ENCODE measurements at regions of chr11 and their contacts with region 1.

Region 1: GRCh38 chr11:798093-798713 is at the start of gene SLC25A22:
- DNase-seq: peak; percentile 95
- ATAC-seq: peak; percentile 77
- H3K4me3 Mint-ChIP-seq: peak within 1 kb of the TSS; percentile 93
- H3K27ac Mint-ChIP-seq: peak within 1 kb of the TSS; percentile 86
- H3K4me1 Mint-ChIP-seq: peaks cover 22% of the 10 kb centered on the region
- H3K27me3 Mint-ChIP-seq: no peaks in the 10 kb centered on the region
- CTCF ChIP-seq: peak; percentile 21
- total RNA-seq, gene SLC25A22: 30.1 and 35.4 TPM in 2 replicates

Region 2: DNA sequence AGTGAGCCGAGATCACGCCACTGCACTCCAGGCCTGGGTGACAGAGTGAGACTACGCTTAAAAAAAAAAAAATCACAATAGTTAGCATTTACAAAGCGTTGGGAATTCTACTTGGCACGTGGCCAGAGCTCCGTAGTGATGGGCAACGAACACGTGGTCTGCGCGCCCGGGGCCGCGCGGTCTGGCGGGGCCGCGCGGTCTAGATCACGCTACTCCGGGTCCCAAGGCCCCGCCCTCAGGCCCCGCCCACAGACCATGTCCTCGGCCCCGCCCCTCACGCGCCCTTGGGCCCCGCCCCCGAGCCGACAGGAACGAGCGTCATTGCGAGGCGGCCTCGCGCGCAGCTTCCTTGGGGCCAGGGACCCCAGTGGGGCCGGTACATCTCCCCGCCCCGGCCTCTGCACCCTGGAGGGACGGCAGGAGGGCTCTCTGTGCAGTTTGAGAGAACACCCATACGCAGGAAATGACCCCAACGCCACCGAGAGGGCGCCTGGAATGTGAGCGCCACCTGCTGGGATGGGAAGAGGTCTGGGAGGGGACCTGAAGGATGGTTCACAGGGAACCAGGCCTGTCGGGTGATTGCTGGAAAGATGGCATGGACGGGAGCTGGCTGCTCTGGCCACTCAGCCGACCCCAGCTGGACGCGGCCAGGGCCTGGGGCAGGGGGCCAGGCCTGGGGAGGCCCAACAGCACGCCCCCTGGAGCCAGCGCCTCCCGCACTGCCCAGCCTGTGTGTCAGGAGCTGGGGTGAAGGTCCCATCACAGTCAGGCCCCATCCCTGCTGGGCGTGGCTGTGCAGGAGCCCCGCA is 350.1 kb before region 1 on chr11:
- CTCF ChIA-PET with region 1: no interaction called
- POLR2A ChIA-PET with region 1: no interaction called
- intact Hi-C with region 1: loop called (anchors 2 kb)
- DNase-seq: peak; percentile 97
- ATAC-seq: peak; percentile 75
- H3K4me3 Mint-ChIP-seq: peak overlapping the region; percentile 94
- H3K27ac Mint-ChIP-seq: peak overlapping the region; percentile 95
- H3K4me1 Mint-ChIP-seq: peaks cover 34% of the 10 kb centered on the region
- H3K27me3 Mint-ChIP-seq: no peaks in the 10 kb centered on the region
- CTCF ChIP-seq: no peak

Region 3: GRCh38 chr11:662689-663274 is 135.4 kb before region 1 on chr11:
- CTCF ChIA-PET with region 1: no interaction called
- POLR2A ChIA-PET with region 1: no interaction called
- intact Hi-C with region 1: loop called (anchors 1 kb)
- DNase-seq: peak; percentile 51
- ATAC-seq: peak; percentile 85
- H3K4me3 Mint-ChIP-seq: no peak overlapping the region
- H3K27ac Mint-ChIP-seq: no peak overlapping the region
- H3K4me1 Mint-ChIP-seq: peaks cover 4% of the 10 kb centered on the region
- H3K27me3 Mint-ChIP-seq: no peaks in the 10 kb centered on the region
- CTCF ChIP-seq: no peak

Region 4: GRCh38 chr11:747158-748006 is 50.8 kb before region 1 on chr11 and contains the start of gene TALDO1:
- CTCF ChIA-PET with region 1: no interaction called
- POLR2A ChIA-PET with region 1: interaction called, 15 read pairs
- intact Hi-C with region 1: loop called (anchors 1 kb)
- DNase-seq: peak; percentile 91
- ATAC-seq: peak; percentile 91
- H3K4me3 Mint-ChIP-seq: peak within 1 kb of the TSS; percentile 86
- H3K27ac Mint-ChIP-seq: peak within 1 kb of the TSS; percentile 82
- H3K4me1 Mint-ChIP-seq: peaks cover 24% of the 10 kb centered on the region
- H3K27me3 Mint-ChIP-seq: no peaks in the 10 kb centered on the region
- CTCF ChIP-seq: no peak
- total RNA-seq, gene TALDO1: 194 and 244 TPM in 2 replicates

Region 5: GRCh38 chr11:809287-810039 is 11.3 kb after region 1 on chr11 and contains the start of gene RPLP2:
- CTCF ChIA-PET with region 1: no interaction called
- POLR2A ChIA-PET with region 1: interaction called, 37 read pairs
- intact Hi-C with region 1: loop called (anchors 1 kb)
- DNase-seq: peak; percentile 97
- ATAC-seq: peak; percentile 82
- H3K4me3 Mint-ChIP-seq: peak within 1 kb of the TSS; percentile 91
- H3K27ac Mint-ChIP-seq: peak within 1 kb of the TSS; percentile 98
- H3K4me1 Mint-ChIP-seq: peaks cover 37% of the 10 kb centered on the region
- H3K27me3 Mint-ChIP-seq: no peaks in the 10 kb centered on the region
- CTCF ChIP-seq: no peak
- total RNA-seq, gene RPLP2: 4,124 and 4,449 TPM in 2 replicates

Region 6: GRCh38 chr11:859509-860131 is 61.4 kb after region 1 on chr11:
- CTCF ChIA-PET with region 1: no interaction called
- POLR2A ChIA-PET with region 1: no interaction called
- intact Hi-C with region 1: no loop called
- DNase-seq: no peak
- ATAC-seq: no peak
- H3K4me3 Mint-ChIP-seq: no peak overlapping the region
- H3K27ac Mint-ChIP-seq: no peak overlapping the region
- H3K4me1 Mint-ChIP-seq: no peaks in the 10 kb centered on the region
- H3K27me3 Mint-ChIP-seq: no peaks in the 10 kb centered on the region
- CTCF ChIP-seq: no peak

Region 7: GRCh38 chr11:1521382-1522080 is 723.3 kb after region 1 on chr11:
- CTCF ChIA-PET with region 1: no interaction called
- POLR2A ChIA-PET with region 1: no interaction called
- intact Hi-C with region 1: loop called (anchors 5 kb)
- DNase-seq: peak; percentile 79
- ATAC-seq: peak; percentile 94
- H3K4me3 Mint-ChIP-seq: peak overlapping the region; percentile 76
- H3K27ac Mint-ChIP-seq: peak overlapping the region; percentile 74
- H3K4me1 Mint-ChIP-seq: peaks cover 68% of the 10 kb centered on the region
- H3K27me3 Mint-ChIP-seq: no peaks in the 10 kb centered on the region
- CTCF ChIP-seq: no peak

Region 8: GRCh38 chr11:1863352-1864216 is 1065.4 kb after region 1 on chr11:
- CTCF ChIA-PET with region 1: no interaction called
- POLR2A ChIA-PET with region 1: no interaction called
- intact Hi-C with region 1: no loop called
- DNase-seq: no peak
- ATAC-seq: no peak
- H3K4me3 Mint-ChIP-seq: no peak overlapping the region
- H3K27ac Mint-ChIP-seq: no peak overlapping the region
- H3K4me1 Mint-ChIP-seq: peaks cover 39% of the 10 kb centered on the region
- H3K27me3 Mint-ChIP-seq: no peaks in the 10 kb centered on the region
- CTCF ChIP-seq: no peak

Measured in activated B cell treated with CpG ODN at 0.5 μM for 24 hours (primary cell).